ENCODE measurements at regions of chr7 and their contacts with region 1.

Region 1: DNA sequence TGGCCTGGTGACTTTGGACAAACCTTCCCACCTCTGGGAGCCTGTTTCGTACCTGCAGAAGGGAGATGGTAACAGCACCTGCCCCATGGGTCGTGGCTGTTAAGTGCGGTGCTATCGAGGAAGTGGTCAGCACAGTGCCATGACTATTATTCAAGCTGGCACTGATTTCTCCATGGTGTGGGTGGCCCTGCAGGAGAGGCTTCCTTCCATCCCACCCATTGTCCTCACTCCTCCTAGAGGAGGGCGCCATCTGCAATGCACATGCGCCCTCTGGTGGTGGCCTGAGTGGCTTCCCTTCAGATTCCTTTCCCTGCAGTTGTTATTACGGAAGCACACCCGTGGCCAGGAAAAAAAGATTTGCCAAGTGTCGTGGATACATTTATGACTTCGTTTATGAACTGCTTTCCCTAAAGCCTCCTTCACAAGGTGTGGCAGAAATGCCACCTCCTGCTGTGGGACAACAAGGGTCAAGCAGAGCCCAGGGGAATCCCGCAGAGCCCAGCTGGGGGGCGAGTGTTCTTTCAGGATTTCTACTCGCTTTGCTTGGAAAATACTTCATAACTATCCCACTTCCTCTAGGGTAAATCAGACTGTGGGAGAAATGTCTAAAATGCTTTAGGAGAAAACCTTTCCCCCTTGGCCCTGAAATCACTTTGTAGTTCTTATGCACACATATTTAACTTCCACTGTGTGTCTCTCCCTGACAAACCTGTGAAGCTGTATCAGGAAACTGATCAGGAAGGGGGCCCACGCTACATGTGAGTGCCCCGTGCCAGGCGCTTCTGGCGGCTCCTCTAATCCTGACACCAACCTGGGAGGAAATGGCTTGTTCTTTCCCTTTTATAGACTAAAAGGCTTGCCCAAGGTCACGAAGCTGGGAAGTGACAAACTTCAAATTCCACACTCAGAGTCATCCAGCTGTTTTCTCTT is 98.0 kb upstream of the ANLN start:
- DNase-seq: peak; percentile 80 to 83 (median 82)
- H3K4me3 ChIP-seq: peak overlapping the region; percentile 8 to 64 (median 37)
- H3K4me3 Mint-ChIP-seq: peak overlapping the region; percentile 72 to 87
- H3K27ac ChIP-seq: peak overlapping the region in 1 of 2 donors; percentile 51
- H3K27ac Mint-ChIP-seq: peak overlapping the region in 5 of 7 donors; percentile 73 to 93 (median 84)
- H3K4me1 ChIP-seq: peaks cover 28 to 29% of the 10 kb centered on the region in 2 donors
- H3K4me1 Mint-ChIP-seq: peaks cover 44% of the 10 kb centered on the region
- H3K27me3 ChIP-seq: no peaks in the 10 kb centered on the region
- H3K27me3 Mint-ChIP-seq: peaks cover 0 to 8% (median 0%) of the 10 kb centered on the region in 3 donors
- CTCF ChIP-seq: peak; percentile 99

Region 2: GRCh38 chr7:35985126-35985754 is 306.4 kb before region 1 on chr7:
- intact Hi-C with region 1: loop called (anchors 2 to 5 kb)
- DNase-seq: peak; percentile 65 to 77 (median 75)
- H3K4me3 ChIP-seq: no peak overlapping the region
- H3K4me3 Mint-ChIP-seq: no peak overlapping the region
- H3K27ac ChIP-seq: no peak overlapping the region
- H3K27ac Mint-ChIP-seq: peak overlapping the region in 1 of 7 donors; percentile 40
- H3K4me1 ChIP-seq: no peaks in the 10 kb centered on the region
- H3K4me1 Mint-ChIP-seq: no peaks in the 10 kb centered on the region
- H3K27me3 ChIP-seq: no peaks in the 10 kb centered on the region
- H3K27me3 Mint-ChIP-seq: peaks cover 0 to 5% (median 0%) of the 10 kb centered on the region in 3 donors
- CTCF ChIP-seq: peak; percentile 94

Region 3: DNA sequence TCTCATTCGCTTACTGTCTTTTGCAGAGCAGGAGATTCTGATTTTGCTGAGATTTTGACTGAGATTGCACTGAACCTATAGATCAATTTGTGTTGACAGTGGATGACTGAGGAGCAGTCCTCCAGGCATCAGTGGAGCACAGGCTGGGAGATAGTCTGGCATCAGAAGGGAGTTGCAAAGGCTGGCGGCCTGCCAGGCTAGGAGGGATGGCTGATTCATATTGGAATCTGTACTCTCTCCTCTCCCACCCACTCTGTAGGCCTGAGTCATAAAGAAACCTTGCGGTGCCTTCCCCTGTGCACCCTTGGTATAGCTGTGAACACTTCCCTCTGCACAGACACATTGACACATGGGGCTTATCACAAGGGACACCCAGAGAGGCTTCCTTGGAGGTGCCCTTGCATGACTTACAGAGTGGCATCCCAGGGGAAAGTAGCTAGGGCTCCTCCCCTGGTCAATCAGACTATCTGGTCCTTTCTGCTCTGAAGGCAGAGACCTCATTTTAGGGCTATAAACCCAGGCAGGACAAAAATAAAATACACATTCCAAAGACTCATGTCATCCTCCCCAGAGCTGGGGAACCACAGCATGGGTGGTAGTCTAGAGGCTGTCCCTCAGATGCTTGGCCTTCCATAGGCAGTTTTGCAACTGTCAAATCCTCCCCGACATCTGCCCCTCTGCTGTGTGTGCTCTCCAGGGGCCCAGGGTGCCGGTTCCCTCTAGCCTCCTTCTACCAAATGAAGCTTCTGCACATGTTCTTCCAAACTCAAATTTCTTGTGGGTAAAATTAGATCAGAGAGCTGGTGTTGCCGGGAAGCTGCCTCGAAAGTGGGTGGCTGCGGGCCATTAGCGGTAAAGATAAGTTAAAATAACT is 176.0 kb before region 1 on chr7:
- intact Hi-C with region 1: loop called in 1 of 2 experiments (anchors 5 kb)
- DNase-seq: peak; percentile 88 to 92 (median 88)
- H3K4me3 ChIP-seq: no peak overlapping the region
- H3K4me3 Mint-ChIP-seq: no peak overlapping the region
- H3K27ac ChIP-seq: peak overlapping the region in 1 of 2 donors; percentile 63
- H3K27ac Mint-ChIP-seq: peak overlapping the region; percentile 71 to 87 (median 84)
- H3K4me1 ChIP-seq: peaks cover 44 to 56% of the 10 kb centered on the region in 2 donors
- H3K4me1 Mint-ChIP-seq: peaks cover 54% of the 10 kb centered on the region
- H3K27me3 ChIP-seq: no peaks in the 10 kb centered on the region
- H3K27me3 Mint-ChIP-seq: peaks cover 0 to 2% (median 2%) of the 10 kb centered on the region in 3 donors
- CTCF ChIP-seq: no peak

Region 4: DNA sequence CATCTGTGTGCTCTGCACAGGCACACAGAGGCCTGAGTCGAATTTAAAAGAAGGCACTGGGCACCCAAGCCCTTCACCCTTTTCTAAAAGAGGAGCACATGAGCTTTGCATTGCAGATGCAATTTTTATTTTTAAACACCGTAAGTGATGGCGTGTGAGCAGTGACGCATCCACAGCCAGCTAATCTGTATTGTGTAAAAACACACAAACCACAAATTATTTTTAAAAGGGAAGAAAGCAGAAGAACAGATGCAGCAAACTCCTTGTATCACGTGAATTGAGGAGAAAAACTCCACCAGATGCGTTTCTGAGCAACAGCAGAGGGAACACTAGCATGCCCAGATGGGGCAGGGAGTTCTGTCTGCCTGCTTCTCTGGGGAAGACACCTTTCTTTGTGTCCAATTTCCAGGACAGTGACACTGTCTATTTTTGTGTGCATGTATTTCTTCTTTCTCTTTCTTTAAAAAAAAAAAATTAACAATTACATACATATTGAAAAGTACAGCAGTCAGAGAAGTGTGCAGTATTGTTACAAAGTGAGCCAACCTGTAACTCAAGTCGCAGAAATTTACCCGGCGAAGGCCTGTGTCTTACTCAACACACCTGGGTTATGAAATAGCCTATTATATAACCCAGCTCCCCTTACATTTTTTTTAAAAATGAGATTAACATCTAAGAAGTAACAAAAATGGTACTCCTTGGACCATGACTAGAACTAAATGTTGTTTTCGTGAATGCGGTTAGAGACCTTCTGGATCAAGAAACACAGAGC is 99.4 kb before region 1 on chr7:
- intact Hi-C with region 1: loop called in 1 of 2 experiments (anchors 5 kb)
- DNase-seq: peak; percentile 93 to 97 (median 96)
- H3K4me3 ChIP-seq: peak overlapping the region in 1 of 3 experiments; percentile 38
- H3K4me3 Mint-ChIP-seq: peak overlapping the region; percentile 51 to 67
- H3K27ac ChIP-seq: peak overlapping the region; percentile 76 to 96
- H3K27ac Mint-ChIP-seq: peak overlapping the region; percentile 95 to 98 (median 96)
- H3K4me1 ChIP-seq: peaks cover 47% of the 10 kb centered on the region in 2 donors
- H3K4me1 Mint-ChIP-seq: peaks cover 60% of the 10 kb centered on the region
- H3K27me3 ChIP-seq: no peaks in the 10 kb centered on the region
- H3K27me3 Mint-ChIP-seq: peaks cover 0 to 9% (median 1%) of the 10 kb centered on the region in 3 donors
- CTCF ChIP-seq: peak; percentile 6

Region 5: GRCh38 chr7:36207451-36208291 is 84.0 kb before region 1 on chr7:
- intact Hi-C with region 1: loop called in 1 of 2 experiments (anchors 5 kb)
- DNase-seq: peak; percentile 77 to 87 (median 84)
- H3K4me3 ChIP-seq: peak overlapping the region in 1 of 3 experiments; percentile 4
- H3K4me3 Mint-ChIP-seq: peak overlapping the region; percentile 16 to 51
- H3K27ac ChIP-seq: peak overlapping the region; percentile 71 to 82
- H3K27ac Mint-ChIP-seq: peak overlapping the region; percentile 86 to 93 (median 91)
- H3K4me1 ChIP-seq: peaks cover 36 to 39% of the 10 kb centered on the region in 2 donors
- H3K4me1 Mint-ChIP-seq: peaks cover 47% of the 10 kb centered on the region
- H3K27me3 ChIP-seq: no peaks in the 10 kb centered on the region
- H3K27me3 Mint-ChIP-seq: peaks cover 0 to 4% (median 3%) of the 10 kb centered on the region in 3 donors
- CTCF ChIP-seq: peak; percentile 23

Region 6: GRCh38 chr7:36264123-36264801 is 27.4 kb before region 1 on chr7:
- intact Hi-C with region 1: loop called in 1 of 2 experiments (anchors 2 kb)
- DNase-seq: peak; percentile 88 to 96 (median 92)
- H3K4me3 ChIP-seq: peak overlapping the region in 1 of 3 experiments; percentile 52
- H3K4me3 Mint-ChIP-seq: peak overlapping the region; percentile 50 to 73
- H3K27ac ChIP-seq: peak overlapping the region; percentile 90 to 93
- H3K27ac Mint-ChIP-seq: peak overlapping the region; percentile 98 to 100 (median 99)
- H3K4me1 ChIP-seq: peaks cover 67 to 75% of the 10 kb centered on the region in 2 donors
- H3K4me1 Mint-ChIP-seq: peaks cover 78% of the 10 kb centered on the region
- H3K27me3 ChIP-seq: no peaks in the 10 kb centered on the region
- H3K27me3 Mint-ChIP-seq: peaks cover 1 to 3% (median 2%) of the 10 kb centered on the region in 3 donors
- CTCF ChIP-seq: no peak

Region 7: GRCh38 chr7:36659172-36659516 is 367.5 kb after region 1 on chr7:
- intact Hi-C with region 1: no loop called
- DNase-seq: peak in 1 of 3 donors; percentile 28
- H3K4me3 ChIP-seq: no peak overlapping the region
- H3K4me3 Mint-ChIP-seq: no peak overlapping the region
- H3K27ac ChIP-seq: peak overlapping the region in 1 of 2 donors; percentile 64
- H3K27ac Mint-ChIP-seq: peak overlapping the region in 5 of 7 donors; percentile 12 to 70 (median 41)
- H3K4me1 ChIP-seq: peaks cover 10 to 17% of the 10 kb centered on the region in 2 donors
- H3K4me1 Mint-ChIP-seq: peaks cover 14% of the 10 kb centered on the region
- H3K27me3 ChIP-seq: no peaks in the 10 kb centered on the region
- H3K27me3 Mint-ChIP-seq: no peaks in the 10 kb centered on the region
- CTCF ChIP-seq: no peak

Measured in CD14-positive monocyte (primary cell).